ENCODE measurements at regions of chr17 and their contacts with region 1.

Region 1: DNA sequence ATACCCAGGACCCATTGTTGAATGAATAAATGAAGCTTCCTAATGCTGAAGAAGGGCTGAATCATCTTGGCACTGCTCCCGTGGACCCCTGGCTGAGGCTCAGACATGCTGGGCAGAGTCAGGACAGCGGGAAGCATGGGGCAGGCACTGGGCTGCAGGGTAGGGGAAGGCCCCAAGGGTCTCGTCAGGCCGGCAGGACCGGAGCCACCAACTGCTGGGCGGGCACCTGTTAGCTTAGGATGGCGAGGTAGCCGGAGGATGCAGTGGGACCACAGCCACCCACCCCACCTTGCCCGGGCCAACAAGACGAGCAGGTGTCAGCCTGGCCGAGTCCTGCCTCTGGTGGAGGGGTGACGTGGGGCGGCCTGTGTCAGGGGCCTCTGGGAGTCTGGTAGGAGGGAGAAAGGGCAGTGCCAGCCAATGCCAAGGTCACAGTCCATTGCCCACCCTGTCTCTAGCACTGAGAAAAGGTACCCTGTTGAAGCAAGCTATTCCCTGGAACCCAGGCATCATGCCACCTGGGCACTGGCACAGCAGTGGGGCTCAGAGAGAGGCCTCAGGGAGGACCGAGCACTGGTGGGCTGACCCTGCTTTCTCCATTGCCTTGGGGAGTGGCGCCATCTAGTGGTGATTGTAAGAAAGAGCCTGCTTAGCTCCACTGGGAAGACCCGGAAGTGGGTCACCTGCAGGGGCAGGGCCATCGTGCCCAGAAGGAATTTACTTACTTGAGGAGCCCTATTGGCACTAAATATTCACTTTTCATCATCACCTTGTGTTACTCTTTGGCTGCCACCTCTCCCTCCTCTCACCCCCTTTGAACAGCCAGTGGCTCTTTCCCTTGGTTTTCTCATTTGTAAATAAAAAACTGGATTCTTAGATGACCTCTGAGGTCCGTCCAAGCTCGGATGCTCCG is 3.0 kb upstream of the DLX3 start:
- DNase-seq: peak; percentile 14
- H3K4me3 ChIP-seq: no peak overlapping the region
- H3K27me3 ChIP-seq: peaks cover 35% of the 10 kb centered on the region
- CTCF ChIP-seq: peak; percentile 92

Region 2: DNA sequence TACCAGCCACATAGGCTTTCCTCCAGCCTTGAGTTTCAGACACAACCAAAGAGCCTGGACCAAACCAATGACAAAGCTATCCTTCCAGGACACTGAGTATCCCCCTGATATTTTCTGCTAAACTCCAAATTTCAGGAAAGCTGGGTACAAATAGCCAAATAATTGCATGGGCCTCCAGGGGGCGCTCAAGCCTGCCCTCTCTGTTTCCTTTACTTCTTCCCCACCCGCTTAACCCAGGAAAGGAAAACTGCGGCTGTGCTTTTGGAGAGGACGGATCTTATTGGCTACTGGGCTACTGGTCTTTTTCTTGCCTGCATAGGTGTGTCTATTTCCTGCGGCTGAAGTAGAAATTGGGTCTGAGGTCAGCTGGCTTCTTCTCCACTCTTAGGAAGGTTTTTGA is 817.7 kb before region 1 on chr17:
- CTCF ChIA-PET with region 1: no interaction called
- POLR2A ChIA-PET with region 1: no interaction called
- DNase-seq: no peak
- H3K4me3 ChIP-seq: no peak overlapping the region
- H3K27me3 ChIP-seq: peaks cover 4% of the 10 kb centered on the region; the same call in 1 of the 2 replicates
- CTCF ChIP-seq: peak; percentile 87

Region 3: GRCh38 chr17:49567871-49568694 is 430.0 kb before region 1 on chr17:
- CTCF ChIA-PET with region 1: interaction called, 26 read pairs
- POLR2A ChIA-PET with region 1: no interaction called
- DNase-seq: no peak
- H3K4me3 ChIP-seq: peak overlapping the region; percentile 23
- H3K27me3 ChIP-seq: peaks cover 7% of the 10 kb centered on the region
- CTCF ChIP-seq: peak; percentile 88

Region 4: DNA sequence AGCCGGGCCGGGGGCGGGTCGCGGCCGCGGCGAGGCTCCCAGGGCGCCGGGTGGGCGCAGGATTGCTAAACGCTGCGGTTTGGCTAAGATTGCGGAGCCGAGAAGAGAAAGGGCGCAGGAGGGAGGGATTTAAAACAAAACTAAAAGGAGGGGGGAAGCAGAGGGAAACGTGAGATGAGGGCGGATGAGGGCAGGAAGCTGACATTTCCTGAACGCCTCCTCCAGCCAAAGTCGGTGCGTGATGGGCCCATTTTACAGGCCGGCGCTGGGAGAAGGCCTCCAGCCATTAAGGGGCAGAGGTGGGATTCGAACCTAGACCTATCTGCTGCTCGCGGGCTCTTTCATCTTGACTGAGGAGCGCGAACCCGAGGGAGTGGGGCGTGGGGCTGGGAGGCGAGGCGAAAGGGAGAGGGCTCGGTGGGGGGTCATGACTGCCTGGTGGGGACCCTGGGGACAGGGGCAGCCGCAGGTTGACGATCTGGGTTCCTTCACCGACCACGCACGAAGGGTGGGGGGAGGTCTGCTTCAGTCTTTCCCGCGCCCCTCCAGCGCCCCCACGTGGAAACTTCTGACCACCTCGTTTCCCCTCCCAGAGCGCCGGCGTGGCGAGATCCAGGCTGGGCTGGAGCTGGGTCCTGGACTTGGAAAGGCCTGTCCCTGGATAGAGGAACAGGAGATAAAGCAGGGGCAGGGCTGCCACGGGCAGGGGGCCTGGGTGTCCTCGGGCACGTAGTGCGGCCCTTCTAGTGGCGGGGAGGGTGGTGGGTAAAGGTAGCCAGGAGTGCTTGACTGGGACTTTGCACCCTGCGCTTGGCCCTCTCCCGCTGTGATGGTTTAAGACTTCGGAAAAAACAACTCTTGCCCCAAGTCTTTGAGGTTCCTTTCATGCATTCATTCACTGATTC is 146.4 kb before region 1 on chr17:
- CTCF ChIA-PET with region 1: interaction called, 464 read pairs
- POLR2A ChIA-PET with region 1: no interaction called
- DNase-seq: no peak
- H3K4me3 ChIP-seq: peak overlapping the region; percentile 38
- H3K27me3 ChIP-seq: peaks cover 11% of the 10 kb centered on the region
- CTCF ChIP-seq: peak; percentile 79

Region 5: DNA sequence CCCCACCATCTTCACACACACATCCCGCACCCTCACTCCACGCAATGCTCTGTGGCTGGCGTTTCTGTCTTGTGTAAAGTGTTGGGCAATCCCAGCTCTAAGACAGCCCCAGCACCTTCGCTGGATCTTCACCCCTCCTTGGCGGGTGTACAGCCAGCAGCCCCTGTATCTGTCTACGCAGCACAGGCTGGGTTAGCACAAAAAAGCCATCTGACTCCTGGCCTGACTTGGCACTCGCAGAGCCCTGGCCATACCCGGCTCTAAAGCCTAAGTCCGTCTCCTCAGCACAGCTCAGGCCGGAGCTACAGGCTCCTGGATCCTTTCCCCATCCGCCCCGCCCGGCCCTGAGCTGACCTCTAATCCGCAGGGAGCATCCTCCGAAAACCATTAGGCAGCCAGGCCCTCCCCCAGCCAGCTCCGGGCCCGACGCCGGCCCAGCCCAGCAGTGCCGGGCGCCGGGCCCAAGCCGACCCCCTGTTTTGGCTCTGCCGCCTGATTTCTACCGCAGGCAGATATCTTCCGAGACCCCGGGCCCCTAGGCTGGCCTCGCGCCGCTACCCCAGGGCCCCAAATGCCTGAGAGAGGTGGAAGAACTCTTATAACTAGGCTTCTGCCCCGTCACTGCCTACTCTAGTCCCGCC is 107.7 kb before region 1 on chr17:
- CTCF ChIA-PET with region 1: interaction called, 13 read pairs
- POLR2A ChIA-PET with region 1: no interaction called
- DNase-seq: no peak
- H3K4me3 ChIP-seq: no peak overlapping the region
- H3K27me3 ChIP-seq: peaks cover 33% of the 10 kb centered on the region
- CTCF ChIP-seq: no peak

Region 6: GRCh38 chr17:49944273-49944890 is 53.7 kb before region 1 on chr17:
- CTCF ChIA-PET with region 1: interaction called, 110 read pairs
- POLR2A ChIA-PET with region 1: no interaction called
- DNase-seq: no peak
- H3K4me3 ChIP-seq: no peak overlapping the region
- H3K27me3 ChIP-seq: peaks cover 43% of the 10 kb centered on the region
- CTCF ChIP-seq: no peak

Region 7: DNA sequence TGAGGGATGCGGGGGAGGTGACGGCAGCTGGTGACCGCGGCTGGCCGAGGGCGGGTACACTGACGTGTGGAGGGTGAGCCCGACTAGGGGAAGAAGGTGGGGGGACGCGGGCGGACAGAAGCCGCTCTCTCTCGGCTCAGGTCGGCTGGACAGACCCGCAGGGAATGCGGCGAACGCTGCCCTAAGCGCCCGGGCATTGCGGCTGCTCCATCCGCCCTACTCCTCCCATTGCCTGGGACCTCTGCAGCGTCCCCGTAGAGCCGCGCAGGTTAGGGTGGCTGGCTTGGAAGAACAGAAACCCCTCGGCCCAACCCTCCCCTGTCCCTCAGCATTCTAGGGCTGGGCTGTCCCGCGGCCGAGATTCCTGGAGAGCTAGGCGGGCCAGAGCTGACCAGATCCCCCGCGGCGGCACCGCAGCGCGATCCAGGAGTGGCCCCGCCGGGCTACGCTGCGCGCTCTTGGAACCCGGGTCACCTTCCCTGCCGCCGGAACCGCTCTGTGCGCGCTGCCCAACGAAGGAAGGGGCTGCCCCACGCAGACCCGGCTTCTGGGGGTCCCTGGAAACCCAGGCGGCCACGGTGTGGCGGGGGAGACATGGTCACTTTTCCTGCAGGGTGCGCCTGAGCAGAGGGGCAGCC is 26.1 kb before region 1 on chr17:
- CTCF ChIA-PET with region 1: interaction called, 56 read pairs
- POLR2A ChIA-PET with region 1: no interaction called
- DNase-seq: no peak
- H3K4me3 ChIP-seq: no peak overlapping the region
- H3K27me3 ChIP-seq: peaks cover 65% of the 10 kb centered on the region
- CTCF ChIP-seq: no peak

Region 8: GRCh38 chr17:50009282-50009681 is 11.2 kb after region 1 on chr17:
- CTCF ChIA-PET with region 1: interaction called, 12 read pairs
- POLR2A ChIA-PET with region 1: interaction called, 5 read pairs
- DNase-seq: no peak
- H3K4me3 ChIP-seq: no peak overlapping the region
- H3K27me3 ChIP-seq: peaks cover 3% of the 10 kb centered on the region
- CTCF ChIP-seq: no peak